HepG2 (cell line): ENCODE measurements at regions of chr17 and their contacts with region 1.

Region 1: DNA sequence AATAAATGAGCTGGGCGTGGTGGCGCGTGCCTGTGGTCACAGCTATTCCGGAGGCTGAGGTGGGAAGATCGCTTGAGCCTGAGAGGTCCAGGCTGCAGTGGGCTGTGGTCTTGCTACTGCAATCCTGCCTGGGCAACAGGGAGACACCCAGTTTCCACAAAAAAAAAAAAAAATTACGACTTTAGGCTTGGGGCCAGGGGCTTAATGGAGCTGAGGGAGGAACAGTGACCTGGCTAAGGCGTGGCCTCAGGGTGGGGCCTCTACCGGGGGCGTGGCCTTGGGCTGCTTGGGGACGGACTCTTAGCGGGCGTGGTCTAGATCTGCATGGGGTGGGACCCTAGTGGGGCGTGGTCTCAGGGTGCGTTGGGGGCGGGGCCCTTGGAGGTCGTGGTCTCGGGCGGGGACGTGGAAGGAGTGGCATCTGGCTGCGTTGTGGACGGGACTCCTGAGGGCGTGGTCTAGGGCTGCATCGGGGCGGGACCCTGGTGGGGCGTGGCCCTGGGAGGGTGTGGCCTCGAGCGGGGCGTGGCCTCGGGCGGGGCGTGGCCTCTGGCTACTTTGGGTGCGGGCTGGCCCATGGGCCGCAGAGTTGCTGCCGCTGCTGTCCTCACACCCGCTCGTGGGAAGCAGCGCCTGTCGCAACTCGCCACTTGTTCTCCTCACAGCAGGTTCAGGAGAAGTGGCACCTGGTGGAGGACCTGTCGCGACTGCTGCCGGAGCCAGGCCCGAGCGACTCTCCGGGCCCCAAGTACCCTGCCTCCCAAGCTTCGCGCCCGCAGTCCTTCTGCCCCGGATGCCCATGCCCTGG is 5.8 kb upstream of the C17orf99 start:
- DNase-seq: peak; percentile 96
- ATAC-seq: peak; percentile 64
- H3K4me3 ChIP-seq: peak overlapping the region; percentile 25 to 67 (median 26); a peak in 5 of 6 replicates
- H3K27ac ChIP-seq: no peak overlapping the region
- H3K4me1 ChIP-seq: peaks cover 90% of the 10 kb centered on the region
- H3K27me3 ChIP-seq: peaks cover 7 to 26% of the 10 kb centered on the region in 2 experiments; a peak in 4 of 5 replicates
- CTCF ChIP-seq: no peak
- EP300 ChIP-seq: no peak
- POLR2A ChIP-seq: peak in 1 of 2 experiments; percentile 26; a peak in 1 of 4 replicates
- RAD21 ChIP-seq: no peak

Region 2: DNA sequence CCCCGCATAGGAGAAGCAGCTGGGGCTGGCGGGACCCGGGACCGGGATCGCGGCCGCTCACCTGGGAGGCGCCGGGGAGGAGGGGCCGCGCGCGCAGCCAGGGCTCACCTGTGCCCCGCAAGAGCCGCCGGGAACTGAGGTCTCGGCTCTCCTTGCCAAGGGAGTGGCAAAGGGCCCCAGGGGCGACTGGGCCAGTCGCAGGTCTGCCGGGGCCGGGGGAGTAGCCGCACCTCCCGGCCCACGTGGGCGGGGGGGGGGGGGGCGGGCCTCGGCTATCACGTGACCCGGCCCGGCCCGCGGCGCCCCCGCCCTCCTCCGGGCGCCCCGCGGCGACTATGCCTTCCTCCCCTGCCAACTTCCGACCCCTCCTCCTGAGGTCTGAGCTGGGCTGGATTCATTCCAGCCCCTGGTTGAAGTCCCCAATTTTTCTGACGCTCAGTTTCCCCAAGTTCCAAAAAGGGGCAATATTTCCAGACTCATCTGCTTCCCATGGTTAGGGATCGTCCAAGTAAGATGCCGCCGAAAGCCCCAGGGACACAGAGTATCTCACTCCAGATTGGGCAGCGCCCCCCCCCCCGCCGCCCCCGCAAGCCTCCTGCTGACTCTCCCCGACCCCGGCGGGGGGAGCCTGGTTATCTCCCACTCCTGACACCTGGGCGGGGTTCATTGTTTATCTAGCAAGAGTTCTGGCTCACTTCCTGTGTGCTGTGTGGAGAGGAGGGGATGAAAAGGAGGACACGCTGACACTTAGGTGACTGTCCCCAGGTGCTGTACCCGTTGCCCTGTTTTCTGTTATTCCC is 11.6 kb before region 1 on chr17 and contains the start of gene TMC6:
- CTCF ChIA-PET with region 1: no interaction called
- POLR2A ChIA-PET with region 1: interaction called, 57 read pairs
- in situ Hi-C with region 1: no loop called
- intact Hi-C with region 1: no loop called
- DNase-seq: peak; percentile 87
- ATAC-seq: peak; percentile 58
- H3K4me3 ChIP-seq: peak within 1 kb of the TSS; percentile 67 to 95 (median 86)
- H3K27ac ChIP-seq: peak within 1 kb of the TSS; percentile 91
- H3K4me1 ChIP-seq: peaks cover 55% of the 10 kb centered on the region
- H3K27me3 ChIP-seq: no peaks in the 10 kb centered on the region
- CTCF ChIP-seq: no peak
- EP300 ChIP-seq: no peak
- POLR2A ChIP-seq: peak; percentile 67 to 77
- RAD21 ChIP-seq: peak; percentile 60
- total RNA-seq, gene TMC6: 20.4 and 48.4 TPM in 2 replicates

Region 3: GRCh38 chr17:78159575-78160158 is 19.3 kb after region 1 on chr17:
- CTCF ChIA-PET with region 1: no interaction called
- POLR2A ChIA-PET with region 1: no interaction called
- in situ Hi-C with region 1: no loop called
- intact Hi-C with region 1: loop called (anchors 1 kb)
- DNase-seq: peak; percentile 90
- ATAC-seq: peak; percentile 83
- H3K4me3 ChIP-seq: peak overlapping the region; percentile 13 to 40 (median 17); a peak in 4 of 6 replicates
- H3K27ac ChIP-seq: peak overlapping the region; percentile 62
- H3K4me1 ChIP-seq: peaks cover 48% of the 10 kb centered on the region
- H3K27me3 ChIP-seq: peaks cover 0 to under 1% of the 10 kb centered on the region in 2 experiments; a peak in 1 of 5 replicates
- CTCF ChIP-seq: no peak
- EP300 ChIP-seq: peak; percentile 34 to 60; a peak in 3 of 4 replicates
- POLR2A ChIP-seq: 0 out of 4 replicates have a peak, but pooled peaks of 1 of the 2 experiments have one; percentile 35
- RAD21 ChIP-seq: no peak

Region 4: DNA sequence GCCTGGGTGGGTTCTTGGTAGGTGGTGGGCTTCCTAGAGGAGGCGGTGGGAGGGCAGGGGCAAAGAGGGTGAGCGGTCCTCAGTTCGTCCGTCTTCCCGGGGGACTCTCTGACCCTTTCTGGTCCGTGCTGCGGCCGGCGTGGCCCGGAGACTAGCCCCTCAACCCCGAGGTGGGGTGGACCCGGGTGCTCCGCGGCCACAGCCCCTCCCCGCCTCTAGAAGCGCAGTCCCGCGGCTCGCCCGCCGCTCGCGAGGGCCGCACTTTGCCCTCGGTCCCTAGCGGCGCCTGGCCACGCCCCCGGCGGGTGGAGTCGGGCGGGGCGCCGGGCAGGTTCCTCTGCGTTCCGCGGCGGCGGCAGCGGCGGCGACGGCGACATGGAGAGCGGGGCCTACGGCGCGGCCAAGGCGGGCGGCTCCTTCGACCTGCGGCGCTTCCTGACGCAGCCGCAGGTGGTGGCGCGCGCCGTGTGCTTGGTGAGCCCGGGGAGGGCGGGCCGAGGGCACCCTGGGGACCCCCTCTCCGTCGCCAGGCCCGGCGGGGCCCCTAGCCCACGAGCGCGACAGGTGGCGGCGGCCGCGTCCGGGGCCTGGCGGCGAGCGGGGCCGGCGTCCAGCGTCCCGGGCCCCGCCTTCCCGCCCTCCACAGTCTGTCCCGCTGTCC is 28.0 kb after region 1 on chr17 and contains the start of gene SYNGR2:
- CTCF ChIA-PET with region 1: no interaction called
- POLR2A ChIA-PET with region 1: interaction called, 7 read pairs
- in situ Hi-C with region 1: no loop called
- intact Hi-C with region 1: loop called (anchors 2 kb)
- DNase-seq: peak; percentile 74
- ATAC-seq: peak; percentile 69
- H3K4me3 ChIP-seq: peak within 1 kb of the TSS; percentile 73 to 88 (median 84)
- H3K27ac ChIP-seq: peak within 1 kb of the TSS; percentile 51
- H3K4me1 ChIP-seq: peaks cover 62% of the 10 kb centered on the region
- H3K27me3 ChIP-seq: peaks cover 0 to 2% of the 10 kb centered on the region in 2 experiments; a peak in 1 of 5 replicates
- CTCF ChIP-seq: peak; percentile 32; the same call in 1 of the 2 replicates
- EP300 ChIP-seq: peak in 1 of 2 experiments; percentile 41; a peak in 2 of 4 replicates
- POLR2A ChIP-seq: peak; percentile 65 to 92
- RAD21 ChIP-seq: peak; percentile 76
- total RNA-seq, gene SYNGR2: 28.7 and 46.7 TPM in 2 replicates

Region 5: DNA sequence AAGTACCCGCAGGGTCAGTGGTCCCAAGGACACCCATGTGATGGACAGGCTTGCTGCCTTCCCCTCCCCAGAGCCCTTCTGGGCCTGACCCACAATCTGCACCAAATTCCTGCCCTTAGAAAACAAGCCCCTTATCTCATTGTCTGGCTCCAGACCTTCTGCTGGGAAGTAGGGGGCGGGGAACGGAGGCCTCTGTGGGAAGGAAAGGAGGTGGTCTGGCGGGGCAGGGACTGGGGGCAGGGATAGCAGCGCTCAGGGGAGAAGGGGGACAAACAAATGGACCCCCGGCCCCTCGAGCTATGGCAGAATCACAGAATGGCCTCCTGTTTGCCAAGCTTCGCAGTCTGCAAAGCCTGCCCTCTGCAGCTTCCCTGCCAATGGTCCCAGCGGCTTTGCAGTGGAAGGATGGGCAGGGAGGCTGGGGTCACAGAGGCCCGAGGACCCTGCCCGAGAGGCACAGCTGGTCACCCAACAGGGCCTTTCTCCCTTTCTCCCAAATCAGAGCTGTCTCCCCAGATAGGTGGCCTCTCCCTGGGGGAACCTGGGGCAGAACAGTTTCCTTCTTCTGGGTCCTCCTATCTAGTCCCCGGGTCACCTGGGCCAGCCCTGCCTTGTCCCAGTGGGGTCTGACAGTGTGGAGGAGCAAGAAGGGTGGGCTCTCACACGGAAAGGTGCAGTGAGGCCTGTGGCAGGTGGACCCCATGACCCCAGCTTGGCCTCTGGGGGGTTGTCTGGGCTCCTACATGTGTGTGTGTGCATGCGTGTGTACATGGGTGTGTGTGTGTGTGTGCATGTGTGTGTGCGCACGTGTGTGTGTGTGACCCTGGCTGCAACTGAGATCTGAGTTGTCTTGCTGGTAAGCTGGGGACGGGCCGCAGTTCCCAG is 116.6 kb after region 1 on chr17:
- CTCF ChIA-PET with region 1: no interaction called
- POLR2A ChIA-PET with region 1: no interaction called
- in situ Hi-C with region 1: no loop called
- intact Hi-C with region 1: no loop called
- DNase-seq: no peak
- ATAC-seq: no peak
- H3K4me3 ChIP-seq: peak overlapping the region in 1 of 3 experiments; percentile 47; a peak in 1 of 6 replicates
- H3K27ac ChIP-seq: no peak overlapping the region
- H3K4me1 ChIP-seq: peaks cover 65% of the 10 kb centered on the region
- H3K27me3 ChIP-seq: peaks cover 2 to 46% of the 10 kb centered on the region in 2 experiments; a peak in 4 of 5 replicates
- CTCF ChIP-seq: no peak
- EP300 ChIP-seq: no peak
- POLR2A ChIP-seq: no peak
- RAD21 ChIP-seq: no peak

Region 6: DNA sequence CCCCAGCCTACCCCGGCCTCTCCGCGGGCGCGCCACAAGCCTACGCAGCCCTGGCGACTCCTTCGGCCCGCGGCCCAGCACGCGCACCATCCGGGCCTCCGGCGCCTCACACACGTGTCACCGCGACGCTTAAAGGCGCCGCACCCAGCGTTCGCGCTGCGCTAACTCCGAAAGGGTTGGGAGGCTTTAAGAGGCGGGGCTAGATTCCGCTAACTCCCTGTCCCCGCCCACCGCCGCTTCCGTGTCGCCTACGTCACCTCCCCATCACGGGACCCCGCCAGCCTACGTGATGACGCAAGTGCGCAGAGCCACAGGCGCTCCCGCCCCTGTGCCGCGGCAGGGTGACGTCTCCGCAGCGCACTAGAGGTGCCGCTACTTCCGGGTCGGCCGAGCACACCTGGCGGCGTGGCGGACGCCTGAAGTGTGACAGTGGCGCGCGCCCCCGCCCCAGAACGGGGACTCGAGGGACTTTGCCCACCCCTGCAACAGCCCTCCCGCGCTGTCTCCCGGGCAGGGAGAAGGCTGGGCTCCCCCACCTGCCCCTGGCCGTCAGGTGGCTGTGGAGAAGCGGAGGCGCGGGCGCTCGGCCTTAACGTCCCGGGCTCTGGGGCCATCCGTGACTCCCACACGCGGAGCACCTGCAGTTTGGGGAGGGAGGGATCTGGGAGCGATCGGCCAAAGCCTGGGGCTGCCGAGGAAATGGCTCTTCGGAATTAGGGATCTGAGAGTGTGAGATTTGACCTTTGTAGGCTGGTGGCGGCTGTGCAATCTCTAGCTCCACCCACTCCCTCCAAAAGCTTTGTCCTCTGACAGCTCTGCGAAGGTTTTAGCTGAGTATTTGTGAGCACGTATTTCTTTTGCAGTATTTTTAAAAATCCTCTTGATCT is 700.6 kb after region 1 on chr17 and contains the start of gene USP36:
- CTCF ChIA-PET with region 1: no interaction called
- POLR2A ChIA-PET with region 1: no interaction called
- in situ Hi-C with region 1: no loop called
- intact Hi-C with region 1: loop called (anchors 5 kb)
- DNase-seq: peak; percentile 98
- ATAC-seq: peak; percentile 88
- H3K4me3 ChIP-seq: peak within 1 kb of the TSS; percentile 71 to 99 (median 91)
- H3K27ac ChIP-seq: peak within 1 kb of the TSS; percentile 91
- H3K4me1 ChIP-seq: peaks cover 60% of the 10 kb centered on the region
- H3K27me3 ChIP-seq: no peaks in the 10 kb centered on the region; a peak in 1 of 5 replicates
- CTCF ChIP-seq: peak; percentile 55
- EP300 ChIP-seq: peak in 1 of 2 experiments; percentile 54; a peak in 1 of 4 replicates
- POLR2A ChIP-seq: peak; percentile 57 to 91
- RAD21 ChIP-seq: no peak; the same call in none of the 2 replicates
- total RNA-seq, gene USP36: 29.6 and 30.7 TPM in 2 replicates

Region 7: GRCh38 chr17:78925234-78925633 is 784.9 kb after region 1 on chr17 and contains the start of gene TIMP2:
- CTCF ChIA-PET with region 1: no interaction called
- POLR2A ChIA-PET with region 1: no interaction called
- in situ Hi-C with region 1: no loop called
- intact Hi-C with region 1: loop called (anchors 5 kb)
- DNase-seq: peak; percentile 70
- ATAC-seq: peak; percentile 79
- H3K4me3 ChIP-seq: peak within 1 kb of the TSS; percentile 78 to 82 (median 78)
- H3K27ac ChIP-seq: peak within 1 kb of the TSS; percentile 59
- H3K4me1 ChIP-seq: peaks cover 51% of the 10 kb centered on the region
- H3K27me3 ChIP-seq: peaks cover 6 to 32% of the 10 kb centered on the region in 2 experiments; a peak in 3 of 5 replicates
- CTCF ChIP-seq: 0 out of 2 replicates have a peak, but pooled peaks have one; percentile 23
- EP300 ChIP-seq: no peak
- POLR2A ChIP-seq: peak; percentile 65 to 84
- RAD21 ChIP-seq: no peak
- total RNA-seq, gene TIMP2: 2.2 and 3.8 TPM in 2 replicates